Right cardiac atrium (tissue), 5 donors: ENCODE measurements at regions of chrX and their contacts with region 1.

Region 1: DNA sequence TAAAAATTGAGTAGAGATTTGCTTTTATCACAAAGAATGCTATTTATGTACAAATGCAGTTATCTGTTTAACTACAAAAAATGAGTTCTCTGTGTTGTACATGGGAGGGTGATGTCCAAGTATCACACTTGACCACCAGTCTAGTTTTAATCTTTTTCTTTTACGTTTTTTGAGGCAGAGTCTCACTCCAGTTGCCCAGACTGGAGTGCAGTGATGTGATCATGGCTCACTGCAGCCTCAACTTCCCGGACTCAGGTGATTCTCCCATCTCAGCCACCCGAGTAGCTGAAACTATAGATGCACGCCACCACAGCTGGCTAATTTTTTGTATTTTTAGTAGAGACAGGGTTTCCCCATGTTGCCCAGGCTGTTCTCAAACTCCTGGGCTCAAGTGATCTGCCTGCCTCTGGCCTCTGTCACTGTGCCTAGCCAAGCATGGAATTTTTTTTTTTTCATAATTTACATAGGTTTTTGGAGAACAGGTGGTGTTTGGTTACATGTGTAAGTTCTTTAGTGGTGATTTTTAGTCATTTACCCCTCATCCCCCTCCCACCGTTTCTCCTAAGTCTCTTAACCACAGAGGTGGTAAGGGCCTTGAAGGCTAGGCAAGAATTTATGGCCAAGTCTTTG is 47.9 kb upstream of the RPA4 start:
- DNase-seq: no peak
- ATAC-seq: no peak
- H3K4me3 ChIP-seq: no peak overlapping the region
- H3K27ac ChIP-seq: no peak overlapping the region
- H3K4me1 ChIP-seq: no peaks in the 10 kb centered on the region
- H3K27me3 ChIP-seq: no peaks in the 10 kb centered on the region

Region 2: DNA sequence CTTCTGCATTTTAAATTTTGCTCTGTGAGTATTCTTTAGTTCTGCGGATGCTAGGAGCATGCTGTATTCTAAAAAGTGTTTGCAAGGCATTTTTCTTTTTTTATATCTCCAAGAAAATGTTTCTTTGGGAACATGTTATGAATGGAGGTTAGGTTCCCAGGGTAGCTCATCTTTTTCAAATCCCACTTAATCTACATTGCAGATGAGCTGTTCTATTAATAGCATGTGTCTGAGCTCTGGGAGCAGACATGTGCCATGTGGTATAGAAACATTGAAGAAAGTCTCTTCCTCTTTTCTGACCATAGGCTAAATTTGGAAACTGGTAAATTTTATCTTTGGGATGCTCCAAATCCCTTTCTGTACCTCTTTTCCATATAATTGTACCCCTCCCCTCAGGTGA is 128.0 kb before region 1 on chrX:
- intact Hi-C with region 1: no loop called
- DNase-seq: no peak
- ATAC-seq: no peak
- H3K4me3 ChIP-seq: no peak overlapping the region
- H3K27ac ChIP-seq: no peak overlapping the region
- H3K4me1 ChIP-seq: no peaks in the 10 kb centered on the region
- H3K27me3 ChIP-seq: no peaks in the 10 kb centered on the region

Region 3: GRCh38 chrX:96721354-96721753 is 114.4 kb before region 1 on chrX:
- intact Hi-C with region 1: no loop called
- DNase-seq: no peak
- ATAC-seq: no peak
- H3K4me3 ChIP-seq: no peak overlapping the region
- H3K27ac ChIP-seq: no peak overlapping the region
- H3K4me1 ChIP-seq: no peaks in the 10 kb centered on the region
- H3K27me3 ChIP-seq: no peaks in the 10 kb centered on the region

Region 4: DNA sequence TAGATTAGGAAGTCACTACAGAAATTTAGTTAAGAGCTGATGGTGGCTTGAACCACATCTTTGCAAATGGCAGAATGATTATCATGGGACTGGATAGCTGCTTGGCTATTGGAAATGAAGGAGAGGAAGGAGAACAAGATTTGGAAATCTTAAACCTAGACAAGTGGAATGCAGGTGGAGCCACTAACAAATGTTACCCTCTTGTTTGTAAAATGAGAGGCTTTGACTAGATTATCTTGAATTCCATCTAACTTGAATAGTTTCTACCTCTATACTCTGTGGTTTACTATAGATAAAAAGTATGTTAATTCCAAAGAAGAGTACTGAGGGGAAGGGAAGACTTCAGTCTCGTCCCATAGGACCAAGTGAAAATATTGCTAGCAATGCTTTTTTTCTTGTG is 102.1 kb before region 1 on chrX:
- intact Hi-C with region 1: no loop called
- DNase-seq: no peak
- ATAC-seq: no peak
- H3K4me3 ChIP-seq: no peak overlapping the region
- H3K27ac ChIP-seq: no peak overlapping the region
- H3K4me1 ChIP-seq: peaks cover 3% of the 10 kb centered on the region
- H3K27me3 ChIP-seq: no peaks in the 10 kb centered on the region

Region 5: DNA sequence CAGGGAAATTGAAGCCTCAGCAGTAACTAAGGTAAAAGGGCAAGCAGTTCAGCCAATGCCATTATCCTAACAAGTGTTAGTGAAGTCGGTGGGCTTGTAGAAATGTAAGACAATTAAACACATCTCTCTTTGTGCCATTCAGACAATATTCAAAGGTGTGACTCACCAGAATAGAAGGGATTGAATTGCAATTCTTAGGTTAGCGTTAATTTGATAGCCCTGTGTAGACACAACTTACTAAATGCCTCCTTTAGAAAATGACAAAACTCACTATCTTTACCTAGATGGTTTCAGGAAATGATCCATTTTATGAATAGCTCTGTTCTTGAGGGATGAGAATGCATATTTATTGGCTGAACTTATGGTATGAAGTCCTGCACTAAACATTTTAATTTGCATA is 83.1 kb after region 1 on chrX:
- intact Hi-C with region 1: loop called in 1 of 4 experiments (anchors 10 kb)
- DNase-seq: no peak
- ATAC-seq: no peak
- H3K4me3 ChIP-seq: no peak overlapping the region
- H3K27ac ChIP-seq: no peak overlapping the region
- H3K4me1 ChIP-seq: no peaks in the 10 kb centered on the region
- H3K27me3 ChIP-seq: no peaks in the 10 kb centered on the region